Ascending aorta (tissue), 2 donors: ENCODE measurements at regions of chr3 and their contacts with region 1.

Region 1: GRCh38 chr3:9890249-9891071 is at the start of gene JAGN1:
- DNase-seq: peak; percentile 46 to 93
- H3K4me3 ChIP-seq: peak within 1 kb of the TSS; percentile 90 to 98
- H3K27ac ChIP-seq: peak within 1 kb of the TSS; percentile 93 to 98
- H3K4me1 ChIP-seq: peaks cover 0 to 7% of the 10 kb centered on the region in 2 donors
- H3K27me3 ChIP-seq: no peaks in the 10 kb centered on the region
- CTCF ChIP-seq: no peak
- total RNA-seq, gene JAGN1: 55.2 TPM

Region 2: GRCh38 chr3:9828801-9829755 is 61.4 kb before region 1 on chr3:
- intact Hi-C with region 1: no loop called
- DNase-seq: no peak
- H3K4me3 ChIP-seq: no peak overlapping the region
- H3K27ac ChIP-seq: no peak overlapping the region
- H3K4me1 ChIP-seq: no peaks in the 10 kb centered on the region
- H3K27me3 ChIP-seq: no peaks in the 10 kb centered on the region
- CTCF ChIP-seq: no peak

Region 3: DNA sequence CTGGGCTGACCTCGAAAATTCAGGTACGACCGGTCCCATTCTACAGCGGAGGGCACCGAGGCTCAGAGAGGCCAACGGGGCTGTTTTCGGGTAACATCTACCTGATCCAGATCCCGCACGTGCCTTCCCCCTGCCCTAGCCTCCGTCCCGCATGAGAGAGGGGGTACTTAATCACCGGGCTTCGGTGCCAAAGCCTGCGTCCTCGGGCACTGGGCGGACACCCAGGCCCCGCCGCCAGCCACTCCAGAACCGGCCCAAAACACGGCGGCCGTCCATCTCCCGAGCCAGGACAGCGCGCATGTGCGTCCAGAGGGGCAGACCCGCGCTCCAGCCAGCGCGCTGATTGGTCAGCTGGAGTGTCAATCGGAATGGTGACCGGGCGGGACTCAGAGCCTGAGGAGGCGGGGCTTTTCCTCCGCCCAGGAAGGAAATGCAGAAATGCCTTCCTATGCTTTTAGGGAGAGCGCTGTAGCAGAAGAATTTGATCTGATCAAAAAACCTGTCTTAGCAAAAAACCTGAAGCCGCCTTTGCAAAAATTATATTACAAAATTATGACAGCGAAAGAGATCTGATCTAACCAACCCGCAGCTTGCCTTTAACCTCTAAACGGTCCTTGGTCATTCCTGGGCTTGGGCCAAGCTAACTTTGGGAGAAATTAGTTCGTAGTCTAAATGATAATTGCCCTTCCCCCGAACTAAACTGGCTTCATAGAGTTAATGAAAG is 46.6 kb before region 1 on chr3 and contains the start of gene RPUSD3:
- intact Hi-C with region 1: loop called (anchors 1 kb)
- DNase-seq: peak; percentile 89 to 99
- H3K4me3 ChIP-seq: peak within 1 kb of the TSS; percentile 76 to 77
- H3K27ac ChIP-seq: peak within 1 kb of the TSS; percentile 80 to 84
- H3K4me1 ChIP-seq: peaks cover 4 to 9% of the 10 kb centered on the region in 2 donors
- H3K27me3 ChIP-seq: no peaks in the 10 kb centered on the region
- CTCF ChIP-seq: no peak
- total RNA-seq, gene RPUSD3: 30.7 TPM

Region 4: GRCh38 chr3:9866639-9867038 is 23.8 kb before region 1 on chr3:
- intact Hi-C with region 1: loop called (anchors 2 kb)
- DNase-seq: peak in 1 of 2 donors; percentile 82
- H3K4me3 ChIP-seq: no peak overlapping the region
- H3K27ac ChIP-seq: peak overlapping the region; percentile 60 to 73
- H3K4me1 ChIP-seq: peaks cover 0 to 24% of the 10 kb centered on the region in 2 donors
- H3K27me3 ChIP-seq: no peaks in the 10 kb centered on the region
- CTCF ChIP-seq: no peak

Region 5: GRCh38 chr3:9915254-9916141 is 25.0 kb after region 1 on chr3:
- intact Hi-C with region 1: loop called (anchors 2 kb)
- DNase-seq: peak in 1 of 2 donors; percentile 85
- H3K4me3 ChIP-seq: peak overlapping the region; percentile 62 to 89
- H3K27ac ChIP-seq: peak overlapping the region; percentile 79 to 86
- H3K4me1 ChIP-seq: peaks cover 22 to 32% of the 10 kb centered on the region in 2 donors
- H3K27me3 ChIP-seq: no peaks in the 10 kb centered on the region
- CTCF ChIP-seq: peak in 2 of 3 experiments; percentile 32 to 56

Region 6: DNA sequence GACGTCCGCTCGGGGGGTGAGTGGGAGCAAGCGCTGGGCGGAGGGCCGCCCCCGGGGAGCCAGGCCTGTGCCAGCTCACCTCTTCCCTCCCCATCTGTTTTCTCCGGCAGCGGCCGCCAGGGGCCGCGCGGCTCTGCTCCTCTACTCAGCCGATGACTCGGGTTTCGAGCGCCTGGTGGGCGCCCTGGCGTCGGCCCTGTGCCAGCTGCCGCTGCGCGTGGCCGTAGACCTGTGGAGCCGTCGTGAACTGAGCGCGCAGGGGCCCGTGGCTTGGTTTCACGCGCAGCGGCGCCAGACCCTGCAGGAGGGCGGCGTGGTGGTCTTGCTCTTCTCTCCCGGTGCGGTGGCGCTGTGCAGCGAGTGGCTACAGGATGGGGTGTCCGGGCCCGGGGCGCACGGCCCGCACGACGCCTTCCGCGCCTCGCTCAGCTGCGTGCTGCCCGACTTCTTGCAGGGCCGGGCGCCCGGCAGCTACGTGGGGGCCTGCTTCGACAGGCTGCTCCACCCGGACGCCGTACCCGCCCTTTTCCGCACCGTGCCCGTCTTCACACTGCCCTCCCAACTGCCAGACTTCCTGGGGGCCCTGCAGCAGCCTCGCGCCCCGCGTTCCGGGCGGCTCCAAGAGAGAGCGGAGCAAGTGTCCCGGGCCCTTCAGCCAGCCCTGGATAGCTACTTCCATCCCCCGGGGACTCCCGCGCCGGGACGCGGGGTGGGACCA is 42.5 kb after region 1 on chr3:
- intact Hi-C with region 1: loop called (anchors 2 kb)
- DNase-seq: peak; percentile 53 to 96
- H3K4me3 ChIP-seq: peak overlapping the region; percentile 82 to 96
- H3K27ac ChIP-seq: peak overlapping the region; percentile 97 to 99
- H3K4me1 ChIP-seq: peaks cover 11 to 21% of the 10 kb centered on the region in 2 donors
- H3K27me3 ChIP-seq: no peaks in the 10 kb centered on the region
- CTCF ChIP-seq: peak; percentile 84 to 93 (median 89)

Region 7: DNA sequence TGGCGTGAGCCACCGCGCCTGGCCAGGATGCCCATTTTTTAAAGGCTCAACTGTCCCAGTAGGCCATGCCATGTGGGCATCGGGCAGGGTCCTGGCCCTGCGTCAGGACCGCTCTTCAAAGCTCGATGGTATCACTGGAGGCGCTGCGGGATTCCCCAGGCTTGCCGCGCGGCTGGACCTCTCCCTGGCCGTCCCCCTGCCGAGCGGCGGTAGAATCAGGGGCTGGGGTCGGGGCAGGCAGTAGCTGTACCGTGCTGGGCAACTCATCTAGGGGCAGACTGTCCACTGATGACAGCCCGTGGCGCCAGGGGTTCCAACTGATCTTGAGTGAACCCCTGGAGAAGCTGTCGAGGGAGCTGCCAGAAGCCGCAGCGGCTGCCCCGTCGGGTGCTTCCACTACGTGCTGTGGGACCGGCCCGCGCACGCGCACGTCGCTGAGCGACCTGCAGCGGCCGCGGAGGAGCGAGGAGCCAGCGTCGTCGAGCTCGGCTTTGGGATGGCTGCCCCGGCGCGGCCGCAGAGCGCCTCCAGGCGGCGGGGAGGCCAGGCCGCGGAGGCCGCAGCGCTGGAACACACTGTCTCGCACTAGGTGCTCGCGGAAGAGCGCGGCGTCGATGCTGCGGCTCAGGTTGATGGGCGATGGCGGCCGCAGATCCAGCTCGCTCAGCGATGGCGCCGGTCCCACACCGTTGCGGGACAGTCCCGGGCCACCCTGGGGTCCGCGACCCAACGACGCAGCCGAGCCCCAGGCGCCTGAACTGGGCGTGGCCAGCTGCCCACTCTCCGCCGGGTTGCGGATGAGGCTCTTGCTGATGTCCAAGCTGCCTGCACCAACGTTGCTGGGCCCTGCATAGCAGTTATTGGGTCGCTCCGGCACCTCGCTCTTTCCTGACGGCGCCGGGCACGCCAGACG is 55.9 kb after region 1 on chr3:
- intact Hi-C with region 1: loop called (anchors 1 kb)
- DNase-seq: peak; percentile 65 to 93
- H3K4me3 ChIP-seq: peak overlapping the region; percentile 76 to 80
- H3K27ac ChIP-seq: peak overlapping the region; percentile 71 to 81
- H3K4me1 ChIP-seq: peaks cover 5 to 7% of the 10 kb centered on the region in 2 donors
- H3K27me3 ChIP-seq: no peaks in the 10 kb centered on the region
- CTCF ChIP-seq: peak; percentile 63 to 88 (median 76)

Region 8: GRCh38 chr3:10010486-10011465 is 120.3 kb after region 1 on chr3:
- intact Hi-C with region 1: no loop called
- DNase-seq: peak; percentile 90 to 98
- H3K4me3 ChIP-seq: peak overlapping the region; percentile 60 to 81
- H3K27ac ChIP-seq: peak overlapping the region; percentile 52 to 78
- H3K4me1 ChIP-seq: peaks cover 9 to 33% of the 10 kb centered on the region in 2 donors
- H3K27me3 ChIP-seq: no peaks in the 10 kb centered on the region
- CTCF ChIP-seq: peak in 1 of 3 experiments; percentile 4